ENCODE measurements at regions of chr2 and their contacts with region 1.

Region 1: GRCh38 chr2:169109502-169110409 is 40.4 kb downstream of the DHRS9 start:
- DNase-seq: peak; percentile 81 to 85 (median 84)
- H3K4me3 ChIP-seq: peak overlapping the region in 2 of 7 experiments; percentile 21 to 25
- H3K27ac ChIP-seq: no peak overlapping the region
- H3K4me1 ChIP-seq: peaks cover 41 to 57% (median 46%) of the 10 kb centered on the region in 4 experiments
- H3K27me3 ChIP-seq: no peaks in the 10 kb centered on the region

Region 2: GRCh38 chr2:168896783-168897182 is 213.0 kb before region 1 on chr2:
- CTCF ChIA-PET with region 1: no interaction called
- POLR2A ChIA-PET with region 1: no interaction called
- DNase-seq: peak in 2 of 3 donors; percentile 14 to 28
- H3K4me3 ChIP-seq: no peak overlapping the region
- H3K27ac ChIP-seq: no peak overlapping the region
- H3K4me1 ChIP-seq: no peaks in the 10 kb centered on the region
- H3K27me3 ChIP-seq: no peaks in the 10 kb centered on the region

Region 3: DNA sequence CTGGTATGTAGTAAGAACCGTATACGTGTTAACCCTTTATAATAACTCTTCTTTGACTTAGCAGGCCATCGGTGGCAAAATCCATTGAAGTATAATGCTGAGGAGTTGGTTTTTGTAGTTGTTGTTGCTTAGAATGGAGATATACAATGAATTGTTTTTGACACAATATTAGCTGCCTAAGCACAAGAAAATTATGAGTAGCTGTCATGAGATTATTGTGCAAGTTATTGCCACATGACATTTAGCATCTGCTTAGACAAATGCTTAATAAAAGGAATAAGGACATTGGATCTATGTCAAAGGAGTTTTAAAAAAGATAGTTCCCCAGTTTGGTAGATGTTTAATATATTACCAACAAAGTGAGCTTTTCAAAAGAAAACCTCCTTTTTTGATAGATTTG is 138.5 kb before region 1 on chr2:
- CTCF ChIA-PET with region 1: interaction called, 13 read pairs
- POLR2A ChIA-PET with region 1: no interaction called
- DNase-seq: no peak
- H3K4me3 ChIP-seq: no peak overlapping the region
- H3K27ac ChIP-seq: no peak overlapping the region
- H3K4me1 ChIP-seq: peaks cover 0 to 2% (median 0%) of the 10 kb centered on the region in 4 experiments
- H3K27me3 ChIP-seq: no peaks in the 10 kb centered on the region

Region 4: GRCh38 chr2:169005080-169005598 is 104.6 kb before region 1 on chr2:
- CTCF ChIA-PET with region 1: no interaction called
- POLR2A ChIA-PET with region 1: no interaction called
- DNase-seq: no peak
- H3K4me3 ChIP-seq: no peak overlapping the region
- H3K27ac ChIP-seq: no peak overlapping the region
- H3K4me1 ChIP-seq: peaks cover 0 to 5% (median 0%) of the 10 kb centered on the region in 4 experiments
- H3K27me3 ChIP-seq: no peaks in the 10 kb centered on the region

Region 5: GRCh38 chr2:169131587-169132512 is 22.1 kb after region 1 on chr2:
- CTCF ChIA-PET with region 1: interaction called, 30 read pairs
- POLR2A ChIA-PET with region 1: no interaction called
- DNase-seq: peak; percentile 42 to 74 (median 67)
- H3K4me3 ChIP-seq: no peak overlapping the region
- H3K27ac ChIP-seq: no peak overlapping the region
- H3K4me1 ChIP-seq: peaks cover 0 to 1% (median 0%) of the 10 kb centered on the region in 4 experiments
- H3K27me3 ChIP-seq: no peaks in the 10 kb centered on the region

Region 6: DNA sequence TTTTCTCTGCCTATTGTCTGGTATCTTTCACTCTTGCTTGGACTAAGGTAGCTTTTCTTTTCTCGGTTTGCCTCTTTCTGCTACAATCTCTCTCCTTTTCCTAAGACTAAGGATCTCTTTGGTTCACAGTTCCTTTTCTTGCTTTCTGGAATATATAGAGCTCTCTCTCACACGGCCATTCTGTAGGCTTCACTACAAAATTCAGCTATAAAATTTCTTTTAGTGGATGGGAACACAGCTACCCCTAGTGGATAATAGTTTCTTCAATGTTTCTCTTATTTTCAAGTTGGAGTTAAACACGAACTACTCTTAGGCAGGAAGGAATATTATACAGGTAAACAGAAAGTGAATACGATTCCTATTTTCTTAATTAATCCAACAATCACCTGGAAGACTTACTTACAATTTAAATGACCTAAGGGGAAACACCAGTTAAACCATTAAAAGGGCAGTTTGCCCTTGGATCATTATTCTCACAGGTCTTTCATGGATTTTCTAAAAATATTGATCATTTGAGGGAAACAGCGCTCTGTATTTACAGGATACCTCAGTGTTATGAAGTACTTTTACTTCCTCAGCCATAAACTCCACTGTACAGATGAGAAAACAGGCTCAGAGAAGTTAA is 112.1 kb after region 1 on chr2:
- CTCF ChIA-PET with region 1: interaction called, 39 read pairs
- POLR2A ChIA-PET with region 1: no interaction called
- DNase-seq: peak; percentile 42 to 60 (median 51)
- H3K4me3 ChIP-seq: no peak overlapping the region
- H3K27ac ChIP-seq: no peak overlapping the region
- H3K4me1 ChIP-seq: peaks cover 0 to 2% (median under 1%) of the 10 kb centered on the region in 4 experiments
- H3K27me3 ChIP-seq: no peaks in the 10 kb centered on the region

Region 7: GRCh38 chr2:169397697-169398096 is 287.9 kb after region 1 on chr2:
- CTCF ChIA-PET with region 1: interaction called, 14 read pairs
- POLR2A ChIA-PET with region 1: no interaction called
- DNase-seq: peak; percentile 3 to 36 (median 23)
- H3K4me3 ChIP-seq: no peak overlapping the region
- H3K27ac ChIP-seq: no peak overlapping the region
- H3K4me1 ChIP-seq: no peaks in the 10 kb centered on the region
- H3K27me3 ChIP-seq: no peaks in the 10 kb centered on the region